CD8-positive, alpha-beta T cell (primary cell): ENCODE measurements at regions of chr11 and their contacts with region 1.

Region 1: DNA sequence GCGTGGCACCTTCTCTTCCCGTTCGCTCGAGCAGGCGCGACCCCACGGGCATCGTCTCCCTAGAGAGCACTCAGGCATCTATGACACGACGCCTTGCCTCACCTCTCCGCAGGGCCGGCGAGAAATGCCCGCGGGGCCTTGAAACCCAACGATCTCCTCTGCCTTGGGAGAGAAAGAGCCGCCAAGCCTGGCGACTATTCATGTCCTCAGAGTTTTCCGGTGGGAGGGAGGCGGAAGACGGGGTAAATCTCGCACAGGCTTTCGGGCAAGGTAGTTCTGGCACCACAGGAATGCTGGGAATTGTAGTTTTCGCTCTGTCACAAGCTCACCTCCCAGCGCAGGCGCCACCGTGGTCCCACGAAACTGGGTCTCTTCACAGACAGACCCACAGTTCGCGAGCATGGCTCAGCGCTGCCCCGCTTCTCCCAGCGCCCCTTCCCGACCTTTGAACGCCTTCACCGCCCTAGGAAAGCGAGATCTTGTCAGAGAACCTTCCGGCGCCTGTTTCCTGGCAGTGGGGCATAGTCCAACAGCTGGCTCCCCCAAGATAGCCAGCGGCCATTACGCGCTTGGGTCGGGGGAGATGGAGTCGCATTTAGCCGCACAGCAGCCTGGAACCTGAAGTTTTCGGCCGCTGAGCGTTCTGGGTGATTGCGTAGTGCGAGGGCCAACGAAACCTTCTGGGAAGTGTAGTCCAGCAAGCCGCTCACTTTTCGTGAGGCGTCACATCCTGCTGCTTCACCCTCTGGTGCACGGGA is at the start of gene CCDC90B:
- DNase-seq: peak; percentile 87 to 99 (median 94)
- ATAC-seq: peak; percentile 89
- H3K4me3 ChIP-seq: peak within 1 kb of the TSS; percentile 78 to 86
- H3K4me3 Mint-ChIP-seq: peak within 1 kb of the TSS; percentile 98
- H3K27ac ChIP-seq: peak within 1 kb of the TSS; percentile 88 to 99
- H3K27ac Mint-ChIP-seq: peak within 1 kb of the TSS; percentile 100
- H3K4me1 ChIP-seq: peaks cover 23% of the 10 kb centered on the region
- H3K4me1 Mint-ChIP-seq: peaks cover 46% of the 10 kb centered on the region
- H3K27me3 ChIP-seq: no peaks in the 10 kb centered on the region
- H3K27me3 Mint-ChIP-seq: no peaks in the 10 kb centered on the region
- CTCF ChIP-seq: no peak
- total RNA-seq, gene CCDC90B: 22.7 to 24.8 TPM

Region 2: GRCh38 chr11:81869351-81870065 is 1416.4 kb before region 1 on chr11:
- CTCF ChIA-PET with region 1: no interaction called
- POLR2A ChIA-PET with region 1: no interaction called
- intact Hi-C with region 1: loop called in 1 of 2 experiments (anchors 10 kb)
- DNase-seq: peak; percentile 58 to 96 (median 78)
- ATAC-seq: peak; percentile 82
- H3K4me3 ChIP-seq: peak overlapping the region; percentile 30 to 31
- H3K4me3 Mint-ChIP-seq: peak overlapping the region; percentile 89
- H3K27ac ChIP-seq: peak overlapping the region; percentile 39 to 65
- H3K27ac Mint-ChIP-seq: peak overlapping the region; percentile 97
- H3K4me1 ChIP-seq: peaks cover 45% of the 10 kb centered on the region
- H3K4me1 Mint-ChIP-seq: peaks cover 52% of the 10 kb centered on the region
- H3K27me3 ChIP-seq: no peaks in the 10 kb centered on the region
- H3K27me3 Mint-ChIP-seq: no peaks in the 10 kb centered on the region
- CTCF ChIP-seq: no peak

Region 3: DNA sequence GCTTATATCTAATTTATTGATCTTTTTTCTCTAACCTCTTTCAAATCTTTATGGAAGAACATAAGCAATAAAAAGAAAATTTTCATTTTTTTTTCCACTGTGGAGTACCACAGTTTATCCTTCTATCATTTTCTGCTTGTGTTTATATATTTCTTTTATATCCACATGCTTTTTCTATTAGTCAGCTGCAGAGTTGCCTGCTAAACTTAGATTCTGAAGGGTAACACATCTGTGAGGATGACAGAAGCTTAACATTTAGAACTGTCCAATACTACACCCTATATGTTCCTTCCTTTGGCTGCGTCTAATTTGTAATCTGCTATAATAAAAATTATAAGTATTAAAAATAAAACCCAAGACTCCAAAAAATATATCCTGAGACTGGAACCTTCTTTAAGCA is 20.6 kb before region 1 on chr11:
- CTCF ChIA-PET with region 1: no interaction called
- POLR2A ChIA-PET with region 1: no interaction called
- intact Hi-C with region 1: no loop called
- DNase-seq: no peak
- ATAC-seq: no peak
- H3K4me3 ChIP-seq: no peak overlapping the region
- H3K4me3 Mint-ChIP-seq: no peak overlapping the region
- H3K27ac ChIP-seq: no peak overlapping the region
- H3K27ac Mint-ChIP-seq: no peak overlapping the region
- H3K4me1 ChIP-seq: no peaks in the 10 kb centered on the region
- H3K4me1 Mint-ChIP-seq: peaks cover 18% of the 10 kb centered on the region
- H3K27me3 ChIP-seq: no peaks in the 10 kb centered on the region
- H3K27me3 Mint-ChIP-seq: no peaks in the 10 kb centered on the region
- CTCF ChIP-seq: no peak

Region 4: DNA sequence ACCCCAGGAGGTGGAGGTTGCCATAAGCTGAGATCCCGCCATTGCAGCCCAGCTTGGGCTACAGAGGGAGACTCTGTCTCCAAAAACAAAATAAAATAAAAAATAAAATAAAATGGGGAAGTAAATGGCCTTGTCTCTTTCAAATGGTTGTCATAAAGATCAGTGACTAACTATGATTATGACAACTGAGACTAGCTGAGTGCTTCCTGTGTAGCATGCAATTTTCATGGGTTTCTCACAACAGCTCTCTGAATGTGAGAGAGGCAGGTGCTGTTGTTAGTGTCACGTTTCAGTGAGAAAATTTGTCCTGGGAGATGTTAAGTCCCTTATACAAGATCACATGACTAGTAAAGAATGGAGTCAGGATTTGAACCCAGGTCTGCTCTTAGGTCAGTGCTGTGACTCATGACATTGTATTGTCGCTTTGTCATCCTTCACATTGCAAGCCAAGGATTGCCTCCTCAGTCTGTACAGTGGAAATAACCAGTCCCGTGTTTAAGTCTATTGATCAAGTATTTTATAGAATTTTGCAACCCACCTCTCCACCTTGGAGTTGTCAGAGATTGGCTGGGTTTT is 163.5 kb after region 1 on chr11:
- CTCF ChIA-PET with region 1: no interaction called
- POLR2A ChIA-PET with region 1: no interaction called
- intact Hi-C with region 1: no loop called
- DNase-seq: no peak
- ATAC-seq: no peak
- H3K4me3 ChIP-seq: no peak overlapping the region
- H3K4me3 Mint-ChIP-seq: no peak overlapping the region
- H3K27ac ChIP-seq: no peak overlapping the region
- H3K27ac Mint-ChIP-seq: no peak overlapping the region
- H3K4me1 ChIP-seq: no peaks in the 10 kb centered on the region
- H3K4me1 Mint-ChIP-seq: no peaks in the 10 kb centered on the region
- H3K27me3 ChIP-seq: no peaks in the 10 kb centered on the region
- H3K27me3 Mint-ChIP-seq: peaks cover 3% of the 10 kb centered on the region
- CTCF ChIP-seq: no peak